PC-9 (cell line): ENCODE measurements at regions of chr2 and their contacts with region 1.

Region 1: DNA sequence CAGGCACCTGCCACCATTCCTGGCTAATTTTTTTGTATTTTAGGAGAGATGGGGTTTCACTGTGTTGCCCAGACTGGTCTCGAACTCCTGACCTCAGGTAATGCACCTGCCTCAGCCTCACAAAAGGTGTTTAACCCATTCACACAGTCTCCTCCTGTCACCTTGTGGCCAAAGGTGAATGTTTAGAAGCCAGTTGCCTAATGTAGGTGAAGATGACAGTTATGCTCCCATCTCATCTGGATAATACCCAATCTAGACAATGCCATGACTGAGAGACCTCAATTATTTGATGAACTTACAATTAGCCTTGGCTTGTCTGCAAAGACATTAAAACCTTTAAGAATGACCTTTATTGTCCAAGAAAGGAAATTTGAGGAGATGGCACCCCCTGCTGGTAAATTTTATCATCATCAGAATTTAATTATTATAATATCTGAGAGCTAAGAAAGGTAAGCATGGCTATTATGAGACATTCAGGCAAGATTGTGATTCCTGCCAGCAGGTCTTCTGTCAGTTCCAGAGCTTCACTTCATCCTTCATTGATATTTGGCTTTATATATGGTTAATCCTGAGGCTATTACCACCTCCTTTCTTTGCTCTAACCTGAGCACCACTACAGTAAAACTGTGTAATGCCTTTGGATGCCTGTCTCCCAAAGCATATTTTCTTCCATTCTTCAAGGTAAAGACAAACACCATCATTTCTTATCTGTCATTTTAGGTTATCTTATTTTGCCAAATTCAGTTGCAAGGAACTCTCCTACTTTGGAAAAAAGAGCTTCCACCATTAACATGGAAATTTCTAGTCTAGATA is 117.6 kb downstream of the FAM124B start:
- DNase-seq: peak; percentile 48 to 52
- H3K4me3 ChIP-seq: no peak overlapping the region
- H3K27ac ChIP-seq: no peak overlapping the region
- H3K4me1 ChIP-seq: no peaks in the 10 kb centered on the region
- H3K27me3 ChIP-seq: no peaks in the 10 kb centered on the region
- CTCF ChIP-seq: peak; percentile 100

Region 2: GRCh38 chr2:223247136-223247535 is 1037.2 kb before region 1 on chr2:
- CTCF ChIA-PET with region 1: no interaction called
- POLR2A ChIA-PET with region 1: no interaction called
- intact Hi-C with region 1: loop called (anchors 10 kb)
- DNase-seq: peak in 1 of 2 experiments; percentile 47
- H3K4me3 ChIP-seq: no peak overlapping the region
- H3K27ac ChIP-seq: no peak overlapping the region
- H3K4me1 ChIP-seq: no peaks in the 10 kb centered on the region
- H3K27me3 ChIP-seq: no peaks in the 10 kb centered on the region
- CTCF ChIP-seq: peak; percentile 93

Region 3: GRCh38 chr2:223779877-223780276 is 504.5 kb before region 1 on chr2:
- CTCF ChIA-PET with region 1: no interaction called
- POLR2A ChIA-PET with region 1: no interaction called
- intact Hi-C with region 1: loop called (anchors 5 kb)
- DNase-seq: peak; percentile 58 to 69
- H3K4me3 ChIP-seq: no peak overlapping the region
- H3K27ac ChIP-seq: no peak overlapping the region
- H3K4me1 ChIP-seq: no peaks in the 10 kb centered on the region
- H3K27me3 ChIP-seq: no peaks in the 10 kb centered on the region
- CTCF ChIP-seq: peak; percentile 84

Region 4: GRCh38 chr2:223993621-223994232 is 290.6 kb before region 1 on chr2:
- CTCF ChIA-PET with region 1: interaction called, 55 read pairs
- POLR2A ChIA-PET with region 1: interaction called, 3 read pairs
- intact Hi-C with region 1: loop called (anchors 1 kb)
- DNase-seq: peak; percentile 55 to 70
- H3K4me3 ChIP-seq: no peak overlapping the region
- H3K27ac ChIP-seq: no peak overlapping the region
- H3K4me1 ChIP-seq: no peaks in the 10 kb centered on the region
- H3K27me3 ChIP-seq: no peaks in the 10 kb centered on the region
- CTCF ChIP-seq: peak; percentile 98

Region 5: DNA sequence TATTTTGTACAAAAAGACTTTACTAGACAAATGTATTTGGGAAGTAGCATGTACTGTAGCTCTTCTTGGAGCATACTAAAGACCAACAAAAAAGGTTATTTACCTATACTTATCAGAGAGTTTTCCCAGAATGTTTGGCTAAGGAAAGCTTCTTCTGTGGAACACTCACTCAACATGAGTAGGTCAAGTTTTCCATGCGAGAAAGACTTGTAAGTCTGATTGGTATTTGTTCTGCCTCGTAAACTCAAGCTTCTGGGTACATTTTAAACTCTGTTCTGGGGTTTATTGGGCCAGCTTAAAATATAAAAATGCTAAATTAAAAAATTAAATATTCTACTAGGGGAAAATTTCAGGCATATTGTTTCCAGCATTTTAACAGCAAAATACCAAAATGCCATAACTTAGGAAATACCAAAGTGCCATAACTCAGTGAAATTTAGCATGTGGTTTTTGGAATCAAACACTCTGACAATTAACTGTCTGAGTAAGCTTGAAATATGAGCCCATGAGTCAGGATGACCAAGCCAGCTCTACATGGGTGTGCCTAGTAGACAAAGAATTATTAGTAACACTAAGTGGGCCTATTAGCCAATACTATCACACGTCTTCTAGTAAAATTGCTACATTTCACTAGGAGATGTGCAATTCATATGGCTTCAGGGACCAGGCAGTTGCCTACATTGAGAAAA is 198.0 kb before region 1 on chr2:
- CTCF ChIA-PET with region 1: interaction called, 4 read pairs
- POLR2A ChIA-PET with region 1: interaction called, 6 read pairs
- intact Hi-C with region 1: loop called (anchors 5 kb)
- DNase-seq: peak; percentile 70 to 99
- H3K4me3 ChIP-seq: peak overlapping the region; percentile 0; the same call in 1 of the 2 replicates
- H3K27ac ChIP-seq: peak overlapping the region; percentile 92
- H3K4me1 ChIP-seq: peaks cover 42% of the 10 kb centered on the region
- H3K27me3 ChIP-seq: no peaks in the 10 kb centered on the region
- CTCF ChIP-seq: no peak

Region 6: GRCh38 chr2:224221455-224221913 is 62.9 kb before region 1 on chr2:
- CTCF ChIA-PET with region 1: no interaction called
- POLR2A ChIA-PET with region 1: no interaction called
- intact Hi-C with region 1: loop called (anchors 5 kb)
- DNase-seq: peak; percentile 76 to 99
- H3K4me3 ChIP-seq: no peak overlapping the region
- H3K27ac ChIP-seq: peak overlapping the region; percentile 91
- H3K4me1 ChIP-seq: peaks cover 39% of the 10 kb centered on the region
- H3K27me3 ChIP-seq: no peaks in the 10 kb centered on the region
- CTCF ChIP-seq: no peak

Region 7: DNA sequence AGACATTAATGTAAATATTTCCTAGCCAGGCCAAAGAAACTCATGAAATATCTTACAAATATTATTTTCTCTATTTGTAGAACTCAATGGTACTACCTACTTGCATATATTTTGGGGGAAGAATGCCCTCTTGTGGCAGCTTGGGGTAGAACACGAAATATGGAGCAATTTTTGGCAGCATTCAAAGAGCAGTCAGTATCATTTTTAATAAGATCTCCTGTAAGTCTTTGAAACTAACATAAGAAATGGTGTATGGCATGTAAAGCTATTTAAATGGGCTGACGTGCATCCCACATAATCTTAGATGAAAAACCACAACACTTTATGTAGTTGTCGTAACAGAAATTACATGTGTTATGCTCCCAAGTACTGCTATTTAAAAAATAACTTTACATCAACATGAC is 494.1 kb after region 1 on chr2:
- CTCF ChIA-PET with region 1: no interaction called
- POLR2A ChIA-PET with region 1: no interaction called
- intact Hi-C with region 1: loop called (anchors 5 kb)
- DNase-seq: peak; percentile 67 to 75
- H3K4me3 ChIP-seq: no peak overlapping the region
- H3K27ac ChIP-seq: no peak overlapping the region
- H3K4me1 ChIP-seq: peaks cover 2% of the 10 kb centered on the region
- H3K27me3 ChIP-seq: no peaks in the 10 kb centered on the region
- CTCF ChIP-seq: peak; percentile 99